Psoas muscle (tissue), 8 donors: ENCODE measurements at regions of chr12 and their contacts with region 1.

Region 1: GRCh38 chr12:53952871-53953734 is 1.6 kb upstream of the HOXC12 start:
- DNase-seq: no peak
- ATAC-seq: no peak
- H3K4me3 ChIP-seq: no peak overlapping the region
- H3K27ac ChIP-seq: no peak overlapping the region
- H3K4me1 ChIP-seq: no peaks in the 10 kb centered on the region
- H3K27me3 ChIP-seq: peaks cover 0 to 99% (median 70%) of the 10 kb centered on the region in 3 donors
- CTCF ChIP-seq: no peak

Region 2: DNA sequence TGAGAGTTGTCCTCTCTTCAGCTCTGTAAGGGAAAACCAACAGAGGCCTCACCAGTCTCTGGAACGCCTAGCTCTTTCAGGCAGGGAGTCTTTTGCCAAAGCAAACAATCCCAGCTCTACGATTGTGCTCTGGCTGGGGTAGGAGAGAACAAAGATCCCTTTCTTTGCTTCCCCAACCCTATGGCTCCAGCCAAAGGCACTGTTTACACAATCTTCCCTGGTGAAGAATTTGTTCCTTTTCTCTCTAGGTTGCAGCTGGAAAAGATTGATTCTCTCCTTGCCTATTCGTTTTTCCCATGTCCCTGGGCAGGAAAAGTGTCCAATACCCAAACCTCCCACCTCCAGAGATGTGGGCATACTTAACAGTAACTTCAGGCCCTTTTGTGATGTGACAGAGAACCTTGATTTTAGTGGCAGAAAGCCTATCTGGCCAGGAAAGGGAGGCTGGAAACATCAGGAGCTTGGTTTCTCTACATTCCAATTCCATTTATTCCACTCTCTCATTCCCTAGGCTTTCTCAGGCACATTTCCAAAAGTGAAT is 294.0 kb before region 1 on chr12:
- intact Hi-C with region 1: no loop called
- DNase-seq: no peak
- ATAC-seq: peak; percentile 61 to 74 (median 65)
- H3K4me3 ChIP-seq: peak overlapping the region; percentile 32
- H3K27ac ChIP-seq: peak overlapping the region; percentile 79
- H3K4me1 ChIP-seq: peaks cover 23% of the 10 kb centered on the region
- H3K27me3 ChIP-seq: no peaks in the 10 kb centered on the region
- CTCF ChIP-seq: no peak

Region 3: GRCh38 chr12:53781228-53781801 is 171.8 kb before region 1 on chr12:
- intact Hi-C with region 1: loop called in 1 of 2 experiments (anchors 10 kb)
- DNase-seq: no peak
- ATAC-seq: no peak
- H3K4me3 ChIP-seq: no peak overlapping the region
- H3K27ac ChIP-seq: no peak overlapping the region
- H3K4me1 ChIP-seq: no peaks in the 10 kb centered on the region
- H3K27me3 ChIP-seq: peaks cover 0 to 43% (median 0%) of the 10 kb centered on the region in 3 donors
- CTCF ChIP-seq: no peak